ENCODE measurements at regions of chr4 and their contacts with region 1.

Region 1: DNA sequence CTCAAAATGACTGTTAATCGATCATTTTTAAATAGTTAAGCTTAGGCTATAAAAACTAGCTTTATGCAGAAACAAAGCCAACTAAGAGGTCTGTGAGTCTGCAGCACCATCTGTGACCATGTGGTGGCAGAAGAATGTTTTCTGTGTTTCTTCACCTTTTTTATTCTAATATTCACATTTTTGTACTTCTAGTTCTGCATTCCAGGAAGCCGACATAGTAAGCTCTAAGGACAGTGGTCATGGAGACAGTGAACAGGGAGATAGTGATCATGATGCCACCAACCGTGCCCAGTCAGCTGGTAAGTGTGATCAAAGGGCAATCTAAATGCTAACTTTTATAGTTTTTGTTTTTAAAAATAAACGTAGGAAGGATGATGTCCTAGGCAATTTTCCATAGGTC is 5.6 kb downstream of the PCDH10 start:
- DNase-seq: no peak
- H3K4me3 ChIP-seq: no peak overlapping the region
- H3K27ac ChIP-seq: no peak overlapping the region
- H3K4me1 ChIP-seq: no peaks in the 10 kb centered on the region
- H3K27me3 ChIP-seq: peaks cover 8% of the 10 kb centered on the region
- CTCF ChIP-seq: peak in 3 of 4 experiments; percentile 11 to 26 (median 22)
- POLR2A ChIP-seq: no peak

Region 2: DNA sequence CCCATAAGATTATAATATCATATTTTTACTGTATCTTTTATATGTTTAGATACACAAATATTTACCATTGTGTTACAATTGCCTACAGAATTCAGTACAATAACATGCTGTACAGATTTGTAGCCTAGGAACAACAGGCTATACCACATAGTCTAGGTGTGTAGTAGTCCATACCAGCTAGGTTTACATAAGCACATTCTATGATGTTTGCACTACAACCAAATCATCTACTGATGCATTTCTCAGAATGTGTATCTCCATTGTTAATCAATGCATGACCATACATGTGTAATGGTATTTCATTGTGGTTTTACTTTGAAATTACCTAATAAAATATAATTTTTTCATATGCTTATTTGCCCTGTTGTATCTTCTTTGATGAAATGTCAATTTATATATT is 293.7 kb before region 1 on chr4:
- intact Hi-C with region 1: no loop called
- DNase-seq: no peak
- H3K4me3 ChIP-seq: no peak overlapping the region
- H3K27ac ChIP-seq: no peak overlapping the region
- H3K4me1 ChIP-seq: no peaks in the 10 kb centered on the region
- H3K27me3 ChIP-seq: no peaks in the 10 kb centered on the region
- CTCF ChIP-seq: no peak
- POLR2A ChIP-seq: no peak

Region 3: DNA sequence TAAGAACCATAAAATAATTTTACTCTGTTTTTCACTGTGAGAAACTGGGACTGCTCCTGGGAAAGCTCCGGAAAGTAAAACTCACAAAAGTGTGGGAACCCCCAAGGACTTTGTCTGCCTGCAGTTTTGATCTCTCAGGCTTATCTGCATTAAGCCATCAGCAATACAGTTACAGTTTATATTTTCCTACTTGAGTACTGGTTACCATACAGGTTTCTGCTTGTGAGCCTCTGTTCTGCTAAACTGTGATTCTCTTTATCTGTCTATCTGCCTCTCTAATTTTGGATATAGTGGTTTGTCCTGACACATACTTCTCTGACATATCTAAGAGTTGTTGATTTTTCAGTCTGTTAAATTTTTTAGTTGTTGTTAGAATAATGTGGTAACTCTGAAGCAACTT is 1035.2 kb after region 1 on chr4:
- intact Hi-C with region 1: loop called (anchors 10 kb)
- DNase-seq: no peak
- H3K4me3 ChIP-seq: no peak overlapping the region
- H3K27ac ChIP-seq: no peak overlapping the region
- H3K4me1 ChIP-seq: no peaks in the 10 kb centered on the region
- H3K27me3 ChIP-seq: no peaks in the 10 kb centered on the region
- CTCF ChIP-seq: no peak
- POLR2A ChIP-seq: no peak

Measured in prostate gland (tissue), 2 donors.